ENCODE measurements at regions of chr19 and their contacts with region 1.

Region 1: GRCh38 chr19:53906211-53907192 is 2.6 kb upstream of the CACNG7 start:
- DNase-seq: peak; percentile 29
- H3K4me3 Mint-ChIP-seq: peak overlapping the region; percentile 28
- H3K27ac Mint-ChIP-seq: no peak overlapping the region
- H3K4me1 Mint-ChIP-seq: peaks cover 7% of the 10 kb centered on the region
- H3K27me3 Mint-ChIP-seq: peaks cover 79% of the 10 kb centered on the region
- CTCF ChIP-seq: peak; percentile 92

Region 2: DNA sequence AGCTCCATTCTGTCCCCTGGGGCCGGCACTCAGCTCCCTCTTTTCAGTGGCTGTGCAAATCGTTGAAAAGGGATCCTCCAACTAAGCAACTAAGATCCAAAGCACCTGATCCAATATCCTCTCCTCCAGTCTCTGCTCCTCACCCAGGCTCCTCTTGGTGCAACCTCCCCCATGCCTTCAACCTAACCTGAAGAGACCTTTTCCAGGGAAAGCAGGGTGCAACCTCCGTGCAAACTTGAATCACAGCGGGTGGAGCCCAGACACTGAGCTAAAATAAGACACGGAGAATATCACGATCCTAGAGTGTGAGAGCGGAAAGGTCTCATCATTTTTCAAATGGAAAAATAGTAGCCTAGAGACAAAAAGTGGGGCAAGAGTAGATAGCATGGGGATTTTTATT is 10.9 kb after region 1 on chr19:
- CTCF ChIA-PET with region 1: interaction called, 10 read pairs
- POLR2A ChIA-PET with region 1: no interaction called
- intact Hi-C with region 1: no loop called
- DNase-seq: no peak
- H3K4me3 Mint-ChIP-seq: no peak overlapping the region
- H3K27ac Mint-ChIP-seq: no peak overlapping the region
- H3K4me1 Mint-ChIP-seq: no peaks in the 10 kb centered on the region
- H3K27me3 Mint-ChIP-seq: no peaks in the 10 kb centered on the region
- CTCF ChIP-seq: no peak